Dorsolateral prefrontal cortex (tissue), 120 donors: ENCODE measurements at regions of chr13 and their contacts with region 1.

Region 1: GRCh38 chr13:44191504-44192171 is 182.0 kb upstream of the SERP2 start:
- DNase-seq: peak in 6 of 10 donors; percentile 40 to 76 (median 44)
- H3K4me3 ChIP-seq: peak overlapping the region in 18 of 59 donors; percentile 0 to 43 (median 27)
- H3K27ac ChIP-seq: peak overlapping the region; percentile 17 to 90 (median 76)
- H3K27me3 ChIP-seq: no peaks in the 10 kb centered on the region
- CTCF ChIP-seq: peak; percentile 42 to 82 (median 71)

Region 2: GRCh38 chr13:44153496-44153895 is 38.1 kb before region 1 on chr13:
- intact Hi-C with region 1: loop called in 1 of 2 experiments (anchors 5 kb)
- DNase-seq: no peak
- H3K4me3 ChIP-seq: no peak overlapping the region
- H3K27ac ChIP-seq: peak overlapping the region in 27 of 59 donors; percentile 1 to 88 (median 38)
- H3K27me3 ChIP-seq: no peaks in the 10 kb centered on the region
- CTCF ChIP-seq: no peak

Region 3: DNA sequence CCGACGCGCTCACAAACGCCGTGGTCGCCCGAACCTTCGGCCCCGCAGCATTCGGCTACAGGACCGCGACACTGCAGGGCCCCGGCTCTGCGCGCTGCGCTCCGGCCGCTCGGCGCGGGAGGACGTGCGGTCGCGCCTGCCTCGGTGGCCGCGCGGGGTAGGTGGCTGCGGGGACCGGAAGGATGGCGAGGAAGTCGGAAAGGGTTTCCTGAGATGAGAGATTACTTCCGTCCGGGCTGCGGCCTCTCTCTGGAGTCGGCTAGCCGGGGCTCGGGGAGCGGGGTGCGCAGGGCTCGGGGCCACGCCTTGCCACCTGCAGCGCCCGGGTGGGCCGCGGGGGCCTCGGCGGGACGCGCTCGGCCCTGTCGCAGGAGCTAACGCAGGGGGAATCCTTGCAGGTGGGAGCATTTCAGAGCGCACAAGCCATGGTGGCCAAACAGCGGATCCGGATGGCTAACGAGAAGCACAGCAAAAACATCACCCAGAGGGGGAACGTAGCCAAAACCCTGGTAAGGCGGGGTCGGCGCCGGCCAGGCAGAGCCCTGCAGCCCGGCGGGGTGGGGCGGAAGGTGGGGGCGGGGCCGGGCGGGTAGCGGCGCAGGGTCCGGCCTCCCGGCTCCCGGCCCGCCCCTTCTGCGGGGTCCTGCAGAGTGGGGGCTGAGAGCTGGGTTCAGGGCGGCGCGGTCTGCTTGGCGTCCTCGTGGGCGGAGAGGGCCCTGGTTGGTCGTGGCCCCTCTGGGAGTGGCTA is 182.1 kb after region 1 on chr13 and contains the start of gene SERP2:
- intact Hi-C with region 1: loop called in 1 of 2 experiments (anchors 10 kb)
- DNase-seq: peak in 8 of 10 donors; percentile 28 to 75 (median 54)
- H3K4me3 ChIP-seq: peak within 1 kb of the TSS; percentile 54 to 94 (median 82)
- H3K27ac ChIP-seq: peak within 1 kb of the TSS; percentile 64 to 99 (median 94)
- H3K27me3 ChIP-seq: no peaks in the 10 kb centered on the region
- CTCF ChIP-seq: peak in 3 of 56 donors; percentile 1 to 15 (median 12)
- total RNA-seq, gene SERP2: 37.0 to 96.0 (median 70.9) TPM

Region 4: DNA sequence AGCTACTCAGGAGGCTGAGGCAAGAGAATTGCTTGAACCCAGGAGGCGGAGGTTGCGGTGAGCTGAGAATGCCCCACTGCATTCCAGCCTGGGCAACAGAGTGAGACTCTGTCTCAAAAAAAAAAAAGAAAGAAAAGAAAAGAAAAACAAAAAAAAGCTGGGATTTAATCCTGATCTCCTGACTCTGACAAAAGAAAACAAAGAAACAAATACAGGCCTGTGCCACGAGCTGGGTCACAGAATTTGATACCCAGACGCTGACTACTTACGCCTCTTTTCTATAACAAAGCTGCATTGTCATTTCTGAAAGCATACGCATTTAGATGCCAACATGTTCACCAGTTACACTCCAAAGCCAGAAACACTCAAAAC is 910.5 kb after region 1 on chr13:
- intact Hi-C with region 1: no loop called
- DNase-seq: peak in 4 of 10 donors; percentile 48 to 63 (median 54)
- H3K4me3 ChIP-seq: peak overlapping the region in 21 of 59 donors; percentile 4 to 44 (median 23)
- H3K27ac ChIP-seq: peak overlapping the region; percentile 59 to 99 (median 92)
- H3K27me3 ChIP-seq: no peaks in the 10 kb centered on the region
- CTCF ChIP-seq: peak in 6 of 56 donors; percentile 7 to 34 (median 24)